ENCODE measurements at regions of chr3 and their contacts with region 1.

Region 1: DNA sequence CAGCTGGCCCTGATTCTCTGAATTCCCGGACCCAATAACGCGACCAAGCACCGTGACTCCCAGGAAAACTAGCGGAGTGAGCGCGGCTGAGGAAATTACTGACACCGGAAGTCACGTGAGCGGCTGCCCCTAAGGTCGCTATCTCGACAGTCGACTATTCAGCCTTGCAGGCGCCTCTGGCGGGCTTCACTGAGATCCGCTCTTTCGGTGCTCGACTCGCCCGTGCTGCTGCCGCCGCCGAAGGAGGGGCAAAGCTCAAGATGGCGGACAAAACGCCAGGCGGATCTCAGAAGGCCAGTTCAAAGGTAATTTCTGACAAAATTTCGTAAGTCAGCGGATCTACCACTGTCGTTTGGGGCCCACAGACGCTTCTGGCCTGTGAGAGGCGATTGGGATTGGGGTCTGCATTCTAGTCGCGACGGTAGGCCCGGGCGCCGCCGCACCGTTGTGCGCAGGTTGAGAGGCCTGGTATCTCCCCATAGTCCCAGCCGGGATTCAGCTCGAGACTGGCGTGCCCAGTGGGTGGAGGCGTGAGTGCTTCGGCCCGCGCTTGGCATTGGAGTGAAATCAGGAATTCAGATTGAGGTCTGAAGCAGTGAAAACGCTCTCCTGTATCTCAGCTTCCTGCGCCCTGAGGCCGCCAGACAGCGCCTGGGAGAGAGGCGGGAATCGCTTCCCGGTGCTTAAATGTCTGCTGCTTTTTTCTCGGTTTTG is at the start of gene U2SURP:
- DNase-seq: peak; percentile 91
- H3K4me3 Mint-ChIP-seq: peak within 1 kb of the TSS; percentile 94
- H3K27ac Mint-ChIP-seq: peak within 1 kb of the TSS; percentile 96
- H3K4me1 Mint-ChIP-seq: peaks cover 22% of the 10 kb centered on the region
- H3K27me3 Mint-ChIP-seq: peaks cover 3% of the 10 kb centered on the region
- total RNA-seq, gene U2SURP: 176 TPM in 2 replicates

Region 2: DNA sequence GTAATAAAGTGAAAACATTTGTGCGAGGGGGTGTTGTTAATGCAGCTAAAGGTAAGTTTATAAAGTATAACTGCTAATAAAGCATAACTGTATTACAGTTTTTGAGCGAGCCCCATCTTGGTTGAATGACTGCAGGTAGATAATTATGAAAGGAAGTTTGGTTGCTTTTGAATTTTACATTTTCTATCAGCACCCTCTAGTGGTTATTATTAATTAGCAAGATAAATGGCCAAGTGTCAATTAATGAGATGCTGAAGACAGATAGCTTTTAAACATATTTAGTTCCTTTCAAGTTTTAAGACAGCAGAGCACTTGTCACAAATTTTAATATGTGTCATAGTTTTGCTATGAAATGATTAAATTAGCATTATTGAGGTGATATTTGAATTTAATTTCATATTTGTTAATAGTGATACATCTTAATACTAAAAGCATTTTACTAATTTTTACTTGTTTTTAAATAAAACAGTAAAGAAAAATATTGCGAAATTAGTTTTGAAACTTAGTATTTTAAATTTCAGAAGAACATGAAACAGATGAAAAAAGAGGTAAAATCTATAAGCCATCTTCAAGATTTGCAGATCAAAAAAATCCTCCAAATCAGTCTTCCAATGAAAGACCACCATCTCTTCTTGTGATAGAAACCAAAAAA is 14.9 kb after region 1 on chr3:
- intact Hi-C with region 1: loop called (anchors 1 kb)
- DNase-seq: no peak
- H3K4me3 Mint-ChIP-seq: no peak overlapping the region
- H3K27ac Mint-ChIP-seq: no peak overlapping the region
- H3K4me1 Mint-ChIP-seq: peaks cover 22% of the 10 kb centered on the region
- H3K27me3 Mint-ChIP-seq: no peaks in the 10 kb centered on the region